ENCODE measurements at regions of chr2 and their contacts with region 1.

Region 1: DNA sequence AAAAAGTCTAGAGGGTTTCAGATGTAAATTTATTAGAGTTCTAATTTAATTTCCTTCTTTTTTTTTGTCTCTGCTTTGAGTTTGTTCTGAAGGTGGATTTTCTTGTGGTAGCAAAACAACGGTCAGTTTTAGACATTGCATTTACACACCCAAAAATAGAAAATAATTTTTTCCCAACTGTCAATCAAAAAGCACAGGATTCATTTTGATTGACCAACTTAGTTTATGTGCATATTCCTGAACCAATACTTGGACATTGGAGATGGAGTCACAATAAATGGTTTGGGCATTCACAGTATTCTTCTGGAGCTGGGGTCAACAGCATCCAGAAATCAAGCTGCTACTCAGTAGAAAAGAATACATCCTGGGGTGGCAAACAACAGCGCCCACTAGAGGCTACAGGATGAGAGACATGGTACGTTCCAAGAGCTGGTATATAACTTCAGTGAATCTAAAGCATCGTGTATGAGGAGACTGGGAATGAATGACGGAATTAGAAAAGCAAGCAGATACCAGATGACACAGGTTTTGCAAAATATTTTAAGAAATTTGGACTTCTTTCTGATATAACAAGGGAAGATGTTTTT is 142.8 kb upstream of the FIGN start:
- DNase-seq: peak; percentile 28
- H3K4me3 ChIP-seq: no peak overlapping the region
- H3K27ac ChIP-seq: no peak overlapping the region
- H3K4me1 ChIP-seq: no peaks in the 10 kb centered on the region
- H3K27me3 ChIP-seq: no peaks in the 10 kb centered on the region
- CTCF ChIP-seq: peak; percentile 52 to 61
- POLR2A ChIP-seq: no peak

Region 2: GRCh38 chr2:163621445-163622004 is 257.1 kb before region 1 on chr2:
- CTCF ChIA-PET with region 1: no interaction called
- POLR2A ChIA-PET with region 1: no interaction called
- dilution Hi-C with region 1: no loop called
- intact Hi-C with region 1: loop called (anchors 5 kb)
- DNase-seq: no peak
- H3K4me3 ChIP-seq: no peak overlapping the region
- H3K27ac ChIP-seq: no peak overlapping the region
- H3K4me1 ChIP-seq: peaks cover 4% of the 10 kb centered on the region
- H3K27me3 ChIP-seq: no peaks in the 10 kb centered on the region
- CTCF ChIP-seq: no peak
- POLR2A ChIP-seq: no peak

Region 3: GRCh38 chr2:164164602-164165001 is 286.0 kb after region 1 on chr2:
- CTCF ChIA-PET with region 1: no interaction called
- POLR2A ChIA-PET with region 1: no interaction called
- dilution Hi-C with region 1: no loop called
- intact Hi-C with region 1: no loop called
- DNase-seq: no peak
- H3K4me3 ChIP-seq: no peak overlapping the region
- H3K27ac ChIP-seq: no peak overlapping the region
- H3K4me1 ChIP-seq: no peaks in the 10 kb centered on the region
- H3K27me3 ChIP-seq: no peaks in the 10 kb centered on the region
- CTCF ChIP-seq: no peak
- POLR2A ChIP-seq: no peak